ENCODE measurements at regions of chr7 and their contacts with region 1.

Region 1: GRCh38 chr7:139230774-139231512 is at the start of gene UBN2:
- DNase-seq: peak; percentile 95 to 98 (median 96)
- ATAC-seq: peak; percentile 98 to 99 (median 98)
- H3K4me3 ChIP-seq: peak within 1 kb of the TSS; percentile 73 to 100 (median 95)
- H3K27ac ChIP-seq: peak within 1 kb of the TSS; percentile 86 to 97 (median 96)
- H3K4me1 ChIP-seq: peaks cover 0 to 46% (median 22%) of the 10 kb centered on the region in 12 donors
- H3K27me3 ChIP-seq: no peaks in the 10 kb centered on the region
- CTCF ChIP-seq: no peak
- POLR2A ChIP-seq: peak in 1 of 2 donors; percentile 79
- total RNA-seq, gene UBN2: 7.9 to 26.9 (median 16.7) TPM

Region 2: DNA sequence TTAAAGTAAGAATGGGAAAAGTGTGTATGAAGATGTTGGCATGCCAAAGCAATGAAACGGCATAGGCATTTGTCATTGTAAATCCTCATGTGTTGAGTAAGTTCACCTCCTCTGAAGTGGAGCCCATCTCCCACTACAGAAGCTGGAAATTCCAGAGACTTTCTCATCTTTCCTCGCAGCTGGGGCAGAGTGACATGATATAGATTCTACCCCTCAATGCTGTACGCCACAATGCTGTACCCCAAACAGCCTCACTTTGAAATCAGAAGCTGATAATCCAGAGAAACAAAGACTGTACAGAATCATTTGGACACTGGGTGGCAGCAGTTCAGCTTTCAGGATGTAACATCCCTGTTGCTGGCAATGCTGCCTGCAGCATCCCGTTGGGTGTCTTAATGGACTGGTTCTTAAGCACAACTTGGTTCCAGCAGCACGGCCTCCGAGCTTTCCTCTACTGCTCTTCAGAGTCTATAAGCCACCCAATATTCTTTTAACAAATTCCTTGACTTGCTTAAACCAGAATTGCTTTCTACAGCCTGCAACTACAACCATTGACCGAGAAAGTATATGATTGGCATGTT is 213.9 kb before region 1 on chr7:
- intact Hi-C with region 1: loop called in 1 of 10 experiments (anchors 10 kb)
- DNase-seq: peak in 4 of 5 donors; percentile 58 to 76 (median 62)
- ATAC-seq: peak; percentile 26 to 87 (median 74)
- H3K4me3 ChIP-seq: no peak overlapping the region
- H3K27ac ChIP-seq: no peak overlapping the region
- H3K4me1 ChIP-seq: peaks cover 0 to 7% (median 0%) of the 10 kb centered on the region in 12 donors
- H3K27me3 ChIP-seq: no peaks in the 10 kb centered on the region
- CTCF ChIP-seq: peak; percentile 48 to 79 (median 65)
- POLR2A ChIP-seq: no peak

Region 3: DNA sequence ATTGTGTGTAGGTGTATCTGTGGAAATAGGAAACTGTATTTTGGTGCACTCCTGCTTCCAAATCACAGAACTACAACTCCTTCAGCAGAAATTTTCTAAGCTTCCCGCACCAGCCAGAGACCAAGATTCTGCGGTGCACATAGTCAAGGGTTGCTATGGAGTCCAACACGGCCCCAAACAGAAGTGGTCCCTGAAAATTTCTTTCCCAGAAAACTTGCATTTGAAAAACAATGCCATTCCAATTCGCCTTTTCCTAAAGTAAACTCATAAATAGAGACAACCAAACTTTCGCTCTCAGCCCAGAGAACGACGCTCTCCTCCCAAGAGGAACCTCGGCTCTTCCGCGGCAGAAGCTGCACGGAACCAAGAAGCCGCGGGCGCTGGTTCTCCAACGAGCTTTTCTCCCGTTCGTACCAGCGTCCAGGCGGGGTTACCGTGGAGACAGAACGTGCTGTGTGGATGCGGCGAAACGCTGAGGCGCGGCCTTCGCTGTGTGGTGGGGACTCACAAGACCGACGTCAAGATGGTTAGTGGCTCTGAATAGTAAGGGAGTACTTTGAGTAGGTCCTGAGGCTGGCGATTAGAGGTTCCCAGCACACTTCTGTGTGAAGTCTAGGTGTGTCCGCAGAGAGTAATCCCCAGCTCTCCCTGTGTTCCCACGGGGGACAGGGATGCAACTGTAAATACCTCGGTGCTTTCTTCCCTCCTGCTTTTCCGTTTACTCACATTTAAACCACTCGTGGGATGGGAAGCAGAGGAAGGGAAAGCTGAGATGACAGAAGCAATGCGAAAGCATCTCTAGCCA is 97.4 kb before region 1 on chr7:
- intact Hi-C with region 1: loop called in 2 of 10 experiments (anchors 10 kb)
- DNase-seq: peak; percentile 87 to 94 (median 89)
- ATAC-seq: peak; percentile 97 to 100 (median 99)
- H3K4me3 ChIP-seq: peak overlapping the region; percentile 24 to 77 (median 62)
- H3K27ac ChIP-seq: peak overlapping the region in 11 of 12 donors; percentile 23 to 78 (median 68)
- H3K4me1 ChIP-seq: peaks cover 0 to 29% (median 9%) of the 10 kb centered on the region in 12 donors
- H3K27me3 ChIP-seq: no peaks in the 10 kb centered on the region
- CTCF ChIP-seq: no peak
- POLR2A ChIP-seq: peak in 1 of 2 donors; percentile 11

Region 4: GRCh38 chr7:139340037-139340807 is 109.3 kb after region 1 on chr7:
- intact Hi-C with region 1: loop called in 2 of 10 experiments (anchors 1 to 2 kb)
- DNase-seq: peak; percentile 98 to 99 (median 98)
- ATAC-seq: peak; percentile 87 to 90 (median 90)
- H3K4me3 ChIP-seq: peak overlapping the region; percentile 63 to 88 (median 84)
- H3K27ac ChIP-seq: peak overlapping the region; percentile 96 to 100 (median 99)
- H3K4me1 ChIP-seq: peaks cover 0 to 23% (median 10%) of the 10 kb centered on the region in 12 donors
- H3K27me3 ChIP-seq: no peaks in the 10 kb centered on the region
- CTCF ChIP-seq: peak; percentile 64 to 92 (median 80)
- POLR2A ChIP-seq: peak in 1 of 2 donors; percentile 54

Region 5: DNA sequence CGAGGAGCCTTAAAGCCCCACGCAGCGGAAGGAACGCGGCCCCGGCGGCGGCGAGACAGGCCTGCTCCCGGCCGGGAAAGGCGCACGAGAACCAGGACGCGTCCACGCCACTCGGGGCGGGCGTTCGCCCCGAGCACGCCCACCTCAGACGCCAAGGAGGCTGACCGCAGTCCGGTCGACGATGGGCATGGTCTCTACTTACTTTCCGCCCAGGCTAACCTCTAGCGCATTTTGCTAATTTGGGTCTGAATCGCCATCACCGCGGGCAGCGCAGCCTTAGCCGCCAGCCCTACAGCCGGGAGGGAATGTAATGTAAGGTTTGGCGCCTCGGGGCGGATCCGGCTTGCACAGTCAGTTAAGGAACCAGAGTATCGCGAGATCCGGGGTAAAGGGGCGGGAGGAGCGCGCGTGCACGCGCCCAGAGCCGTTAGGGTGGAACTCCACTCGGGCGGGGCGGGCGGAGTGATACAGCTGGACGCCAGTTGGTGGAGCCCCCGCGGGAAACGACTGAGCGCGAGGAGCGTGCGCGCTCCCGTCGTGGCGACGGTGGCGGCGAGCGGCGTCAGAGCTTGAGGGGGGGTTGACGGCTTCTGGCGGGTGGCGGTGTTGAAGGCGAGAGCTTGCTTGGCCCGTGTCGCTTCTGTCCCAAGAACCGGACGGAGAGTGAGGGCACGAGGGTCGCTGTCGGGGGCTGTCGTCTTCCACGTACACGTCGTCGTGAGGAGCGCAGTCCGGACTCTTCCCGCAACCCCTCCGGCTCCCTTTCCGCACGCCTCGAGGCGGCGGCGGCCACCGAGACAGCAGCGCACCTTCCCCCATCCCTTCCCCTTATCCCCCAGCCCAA is 128.6 kb after region 1 on chr7 and contains the start of gene LUC7L2:
- intact Hi-C with region 1: no loop called
- DNase-seq: peak; percentile 100
- ATAC-seq: peak; percentile 96 to 97 (median 96)
- H3K4me3 ChIP-seq: peak within 1 kb of the TSS; percentile 79 to 100 (median 92)
- H3K27ac ChIP-seq: peak within 1 kb of the TSS; percentile 95 to 100 (median 99)
- H3K4me1 ChIP-seq: peaks cover 5 to 47% (median 32%) of the 10 kb centered on the region in 12 donors
- H3K27me3 ChIP-seq: no peaks in the 10 kb centered on the region
- CTCF ChIP-seq: peak in 5 of 12 donors; percentile 5 to 32 (median 7)
- POLR2A ChIP-seq: peak; percentile 24 to 85
- total RNA-seq, gene LUC7L2: 29.4 to 55.4 (median 46.3) TPM